Dorsolateral prefrontal cortex (tissue), 120 donors: ENCODE measurements at regions of chr3 and their contacts with region 1.

Region 1: DNA sequence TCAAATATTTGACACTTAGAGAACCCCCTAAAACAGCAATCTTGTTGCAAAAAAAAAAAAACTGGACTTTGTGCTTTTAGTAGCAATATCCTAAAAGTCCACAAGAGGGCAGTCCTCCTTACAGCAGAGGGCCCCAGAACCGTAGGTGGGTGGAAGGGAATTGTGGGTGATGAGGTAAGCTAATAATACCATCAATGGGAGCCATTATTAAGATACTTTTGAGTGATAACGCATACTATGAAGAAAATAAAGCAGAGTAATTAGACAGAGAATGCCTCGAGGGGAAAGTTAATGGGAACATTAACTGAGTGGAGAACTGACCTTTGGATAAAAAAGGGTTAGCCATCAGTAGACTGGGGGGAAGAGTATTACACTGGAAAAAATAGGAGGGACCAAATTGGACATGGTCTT is 229.9 kb downstream of the THRB start:
- DNase-seq: no peak
- H3K4me3 ChIP-seq: no peak overlapping the region
- H3K27ac ChIP-seq: no peak overlapping the region
- H3K27me3 ChIP-seq: no peaks in the 10 kb centered on the region
- CTCF ChIP-seq: peak; percentile 49 to 84 (median 72)

Region 2: GRCh38 chr3:24494618-24495325 is 230.0 kb after region 1 on chr3 and contains the start of gene THRB:
- intact Hi-C with region 1: loop called in 1 of 2 experiments (anchors 10 kb)
- DNase-seq: peak; percentile 13 to 82 (median 64)
- H3K4me3 ChIP-seq: peak within 1 kb of the TSS; percentile 57 to 92 (median 79)
- H3K27ac ChIP-seq: peak within 1 kb of the TSS; percentile 55 to 97 (median 90)
- H3K27me3 ChIP-seq: peaks cover 0 to 3% (median 0%) of the 10 kb centered on the region in 45 donors
- CTCF ChIP-seq: peak in 18 of 56 donors; percentile 3 to 42 (median 22)
- total RNA-seq, gene THRB: 48.0 to 214 (median 125) TPM

Region 3: DNA sequence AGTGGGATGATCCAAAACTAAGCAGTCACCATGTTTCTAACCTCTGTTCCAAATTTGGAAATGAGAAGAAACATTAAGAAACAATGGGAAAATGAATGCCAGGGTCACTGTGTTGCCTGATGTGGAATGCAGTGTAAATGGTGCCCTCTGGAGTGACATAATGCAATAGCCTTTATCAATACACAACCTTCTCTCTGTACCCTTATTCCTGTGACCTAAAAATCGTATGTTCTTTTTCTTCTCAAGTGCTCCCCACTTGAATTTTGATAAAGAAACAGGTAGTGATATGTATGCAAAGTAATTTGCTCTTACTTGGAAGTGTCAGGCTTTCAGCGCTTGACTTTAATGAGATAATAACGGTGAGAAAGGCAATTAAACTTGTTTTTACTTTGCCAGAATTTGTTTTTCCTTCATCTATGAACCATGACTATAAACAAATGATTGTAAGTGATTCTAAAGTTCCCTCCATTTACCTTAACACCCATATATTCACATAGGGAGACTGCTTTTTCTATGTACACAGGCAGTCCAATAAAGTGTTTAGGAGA is 375.7 kb after region 1 on chr3:
- intact Hi-C with region 1: loop called in 1 of 2 experiments (anchors 10 kb)
- DNase-seq: no peak
- H3K4me3 ChIP-seq: no peak overlapping the region
- H3K27ac ChIP-seq: no peak overlapping the region
- H3K27me3 ChIP-seq: no peaks in the 10 kb centered on the region
- CTCF ChIP-seq: peak in 52 of 56 donors; percentile 18 to 70 (median 49)